Aorta (tissue), 5 donors: ENCODE measurements at regions of chr2 and their contacts with region 1.

Region 1: GRCh38 chr2:188978291-188979081 is 4.3 kb downstream of the COL3A1 start:
- DNase-seq: no peak
- ATAC-seq: peak; percentile 66
- H3K4me3 ChIP-seq: peak overlapping the region; percentile 51 to 76
- H3K27ac ChIP-seq: peak overlapping the region; percentile 78 to 87
- H3K4me1 ChIP-seq: peaks cover 0 to 2% of the 10 kb centered on the region in 2 donors
- H3K27me3 ChIP-seq: no peaks in the 10 kb centered on the region

Region 2: DNA sequence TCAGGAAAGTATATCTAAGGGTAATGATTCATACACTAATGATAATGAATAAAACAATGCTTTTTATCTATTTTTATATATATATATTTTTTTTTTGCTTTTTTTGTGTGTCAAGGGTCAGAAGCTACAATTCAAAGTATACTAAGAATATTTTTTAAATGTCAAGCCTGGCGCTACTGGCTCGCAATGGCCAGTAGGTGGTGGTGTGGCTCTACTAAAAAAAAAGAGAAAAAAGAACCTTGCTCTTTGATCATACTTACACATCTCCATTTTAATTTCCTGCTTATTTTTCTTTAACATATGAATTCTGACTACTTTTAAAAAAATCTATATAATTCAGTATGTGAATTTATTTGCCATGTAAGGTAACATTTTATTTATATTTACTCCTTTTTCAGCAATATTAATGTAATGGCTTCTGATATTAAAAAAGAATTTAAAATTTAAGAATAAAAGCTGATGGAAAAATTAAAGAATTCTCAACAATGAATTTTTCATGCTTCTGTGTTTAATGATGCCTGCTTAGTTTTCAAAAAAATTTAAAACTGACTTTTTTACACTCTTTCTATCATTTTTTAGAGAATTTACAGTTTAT is 453.9 kb before region 1 on chr2:
- intact Hi-C with region 1: loop called (anchors 2 to 5 kb)
- DNase-seq: no peak
- ATAC-seq: peak; percentile 82
- H3K4me3 ChIP-seq: no peak overlapping the region
- H3K27ac ChIP-seq: no peak overlapping the region
- H3K4me1 ChIP-seq: no peaks in the 10 kb centered on the region
- H3K27me3 ChIP-seq: no peaks in the 10 kb centered on the region

Region 3: DNA sequence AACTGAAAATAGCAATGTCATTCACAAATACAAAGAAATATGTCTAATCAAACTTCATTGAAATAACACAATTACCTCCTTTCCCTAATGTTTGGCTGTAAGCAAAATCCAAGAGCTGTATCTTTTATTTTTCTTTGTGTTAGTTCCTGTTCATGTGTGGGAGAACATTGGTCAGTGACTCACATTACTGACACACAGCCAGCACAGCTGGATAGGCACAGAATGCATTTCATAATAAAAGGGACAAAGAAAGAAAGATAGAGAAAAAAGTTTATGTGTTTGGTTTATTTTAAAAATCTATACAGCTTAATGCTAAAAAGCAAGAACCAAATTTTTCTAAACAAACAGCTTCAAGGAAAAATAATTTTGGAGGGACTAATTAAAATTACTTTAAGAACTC is 189.9 kb before region 1 on chr2:
- intact Hi-C with region 1: loop called (anchors 2 to 5 kb)
- DNase-seq: peak; percentile 80
- ATAC-seq: peak; percentile 72
- H3K4me3 ChIP-seq: no peak overlapping the region
- H3K27ac ChIP-seq: no peak overlapping the region
- H3K4me1 ChIP-seq: peaks cover 0 to 3% of the 10 kb centered on the region in 2 donors
- H3K27me3 ChIP-seq: no peaks in the 10 kb centered on the region

Region 4: DNA sequence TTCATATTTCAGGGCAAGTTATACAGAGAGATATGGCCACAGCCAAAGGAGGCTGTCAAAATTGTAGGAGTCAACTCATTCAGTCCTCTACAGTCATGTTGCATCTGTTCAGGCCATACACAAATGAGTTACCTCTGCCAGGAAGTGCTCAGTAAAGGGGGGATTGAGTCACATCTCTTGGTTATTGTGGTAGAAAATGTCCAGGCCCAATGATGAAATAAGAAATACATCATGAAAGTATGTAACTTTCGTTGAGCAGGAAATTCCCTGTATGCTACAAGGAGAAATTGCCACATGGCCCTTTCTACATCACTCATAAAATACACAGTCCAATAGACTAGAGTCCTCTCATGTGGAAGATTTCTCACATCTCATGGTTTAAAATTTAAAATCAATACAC is 108.2 kb before region 1 on chr2:
- intact Hi-C with region 1: loop called in 1 of 2 experiments (anchors 10 kb)
- DNase-seq: no peak
- ATAC-seq: no peak
- H3K4me3 ChIP-seq: no peak overlapping the region
- H3K27ac ChIP-seq: peak overlapping the region; percentile 44 to 57
- H3K4me1 ChIP-seq: peaks cover 6 to 12% of the 10 kb centered on the region in 2 donors
- H3K27me3 ChIP-seq: no peaks in the 10 kb centered on the region

Region 5: DNA sequence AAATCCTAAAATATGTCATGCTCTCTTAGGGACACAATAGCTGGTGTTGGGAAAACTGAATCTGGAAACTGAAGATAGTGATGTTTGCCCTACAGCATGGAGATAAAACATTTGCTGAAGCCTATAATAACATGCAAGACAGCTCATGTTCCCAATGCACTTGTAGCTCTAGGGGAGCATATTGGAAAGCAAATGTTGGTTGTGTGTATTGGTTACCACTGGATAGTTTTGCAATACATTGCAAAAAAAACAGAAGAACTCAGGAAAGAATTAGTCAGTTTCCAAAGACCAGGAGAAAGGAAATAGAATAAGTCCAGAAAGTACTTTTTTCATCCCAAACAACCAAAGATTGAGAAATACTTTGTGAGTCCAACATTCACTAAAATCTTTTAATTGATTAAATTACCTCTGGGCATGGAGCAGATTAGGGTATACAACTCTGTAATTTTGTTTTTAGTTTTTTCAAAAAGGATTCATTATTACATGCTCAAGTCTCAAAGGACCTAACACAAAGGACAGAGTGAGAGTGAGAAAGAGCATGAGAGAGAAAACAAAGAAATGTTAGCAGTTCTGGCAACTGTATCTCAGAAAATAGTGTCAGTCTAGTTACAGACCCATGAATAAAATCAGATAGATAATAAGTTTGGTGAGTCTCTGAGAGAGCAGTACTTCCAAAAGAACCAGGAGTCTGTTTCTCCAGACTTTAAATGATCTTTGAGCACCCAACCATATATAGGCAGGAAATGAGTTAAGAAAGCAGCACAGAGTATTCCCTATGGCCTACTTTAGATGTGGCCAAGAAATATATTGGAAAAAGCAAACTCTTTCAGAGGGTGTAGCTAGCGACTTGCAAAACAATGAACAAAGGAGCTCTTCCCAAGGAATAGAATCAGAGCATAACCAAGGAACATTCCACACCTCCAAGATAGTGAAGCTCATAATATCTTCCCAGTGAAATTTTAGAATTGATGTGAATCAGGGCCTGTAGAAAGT is 41.0 kb before region 1 on chr2:
- intact Hi-C with region 1: loop called in 1 of 2 experiments (anchors 5 kb)
- DNase-seq: no peak
- ATAC-seq: peak; percentile 79
- H3K4me3 ChIP-seq: no peak overlapping the region
- H3K27ac ChIP-seq: peak overlapping the region; percentile 64 to 98
- H3K4me1 ChIP-seq: peaks cover 0 to 3% of the 10 kb centered on the region in 2 donors
- H3K27me3 ChIP-seq: no peaks in the 10 kb centered on the region